Activated CD8-positive, alpha-beta memory T cell treated with anti-CD3 and anti-CD28 coated beads, Interleukin-2, amount 10 ng/mL, durations not matched to agents 7 days and 5 days (primary cell): ENCODE measurements at regions of chr21 and their contacts with region 1.

Region 1: GRCh38 chr21:44927587-44928461 is 7.1 kb upstream of the ITGB2 start:
- DNase-seq: peak; percentile 91
- ATAC-seq: peak; percentile 60
- H3K4me3 Mint-ChIP-seq: peak overlapping the region; percentile 72
- H3K27ac Mint-ChIP-seq: peak overlapping the region; percentile 93
- H3K4me1 Mint-ChIP-seq: peaks cover 78% of the 10 kb centered on the region
- H3K27me3 Mint-ChIP-seq: no peaks in the 10 kb centered on the region

Region 2: GRCh38 chr21:44820851-44821250 is 107.0 kb before region 1 on chr21:
- CTCF ChIA-PET with region 1: no interaction called
- DNase-seq: no peak
- ATAC-seq: no peak
- H3K4me3 Mint-ChIP-seq: no peak overlapping the region
- H3K27ac Mint-ChIP-seq: no peak overlapping the region
- H3K4me1 Mint-ChIP-seq: peaks cover 9% of the 10 kb centered on the region
- H3K27me3 Mint-ChIP-seq: no peaks in the 10 kb centered on the region

Region 3: DNA sequence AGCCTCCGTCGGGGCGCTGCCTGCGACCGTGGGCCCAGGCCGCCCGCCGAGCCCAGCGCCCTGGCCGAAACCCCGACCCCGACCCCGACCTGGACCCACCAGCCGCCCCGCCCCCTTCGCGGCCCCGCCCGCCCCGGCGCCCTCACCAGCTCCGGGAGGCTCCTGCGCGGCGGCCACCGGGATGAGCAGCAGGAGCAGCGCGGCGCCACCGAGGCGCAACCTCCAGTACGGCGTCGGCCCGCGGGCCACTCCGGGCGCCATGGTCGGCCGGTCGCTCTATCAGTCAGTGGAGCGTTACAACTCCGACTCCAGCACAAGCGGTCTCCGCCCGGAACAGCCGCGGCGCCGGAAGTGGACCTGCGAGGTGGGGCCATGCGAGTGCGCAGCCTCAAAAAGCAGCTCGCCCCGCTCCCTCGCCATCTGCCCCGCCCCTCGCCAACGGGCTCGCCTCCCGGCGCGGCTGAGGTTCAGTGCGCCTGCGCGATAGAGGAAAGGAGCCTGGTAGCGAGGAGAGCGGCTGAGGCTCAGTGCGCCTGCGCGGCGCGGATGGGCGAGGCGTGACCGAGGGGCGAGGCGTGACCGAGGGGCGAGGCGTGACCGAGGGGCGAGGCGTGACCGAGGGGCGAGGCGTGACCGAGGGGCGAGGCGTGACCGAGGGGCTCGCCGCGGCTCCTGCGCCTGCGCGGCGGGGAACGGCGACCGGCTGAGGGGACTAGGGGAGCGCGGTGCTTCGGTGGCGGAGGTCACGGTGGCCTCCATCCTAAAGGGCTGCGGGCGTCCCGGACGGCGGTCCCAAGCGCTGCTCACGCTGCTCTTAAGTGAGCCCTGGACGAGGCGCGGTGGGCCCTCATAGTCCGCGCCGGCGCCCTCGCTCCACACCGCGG is 54.2 kb before region 1 on chr21 and contains the start of gene PTTG1IP:
- CTCF ChIA-PET with region 1: interaction called, 36 read pairs
- DNase-seq: peak; percentile 99
- ATAC-seq: peak; percentile 86
- H3K4me3 Mint-ChIP-seq: peak within 1 kb of the TSS; percentile 86
- H3K27ac Mint-ChIP-seq: peak within 1 kb of the TSS; percentile 90
- H3K4me1 Mint-ChIP-seq: peaks cover 41% of the 10 kb centered on the region
- H3K27me3 Mint-ChIP-seq: no peaks in the 10 kb centered on the region
- total RNA-seq, gene PTTG1IP: 46.0 to 49.9 TPM

Region 4: DNA sequence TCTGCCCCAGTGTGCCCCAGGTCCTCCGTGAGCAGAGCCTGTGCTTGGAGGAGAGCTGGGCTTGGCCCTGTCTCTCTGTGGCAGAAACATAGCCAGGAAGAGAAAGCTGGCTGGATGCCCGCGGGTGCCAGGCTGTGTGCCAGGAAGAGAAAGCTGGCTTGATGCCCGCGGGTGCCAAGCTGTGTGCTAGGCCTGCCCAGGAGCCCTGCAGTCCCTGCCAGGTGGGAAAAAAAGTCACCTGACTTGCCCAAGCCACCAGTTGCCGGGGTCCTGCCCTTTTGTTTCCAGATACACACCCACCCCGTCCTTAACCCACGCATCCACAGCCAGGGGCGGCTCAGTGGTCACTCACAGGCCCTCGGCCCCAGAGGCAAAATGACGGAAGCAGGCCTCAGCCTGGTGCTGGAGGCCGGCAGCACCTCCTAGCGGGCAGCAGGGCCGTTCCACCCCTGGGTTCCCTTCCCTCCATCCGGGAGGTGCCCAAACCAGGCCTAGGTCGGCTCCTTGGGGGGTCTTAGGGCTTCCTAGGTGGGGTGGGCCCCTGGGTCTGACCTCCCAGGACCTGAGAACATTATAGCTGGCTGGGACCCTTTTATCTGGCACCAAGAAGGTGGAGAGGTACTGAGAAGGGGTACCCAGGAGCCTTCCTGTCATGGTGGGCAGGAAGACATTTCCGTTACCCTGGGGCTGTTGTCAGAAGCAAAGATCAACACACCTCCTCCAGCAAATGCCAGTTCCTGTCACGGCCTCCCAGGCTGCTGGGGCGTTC is 16.3 kb before region 1 on chr21:
- CTCF ChIA-PET with region 1: interaction called, 185 read pairs
- DNase-seq: peak; percentile 79
- ATAC-seq: peak; percentile 60
- H3K4me3 Mint-ChIP-seq: peak overlapping the region; percentile 42
- H3K27ac Mint-ChIP-seq: peak overlapping the region; percentile 83
- H3K4me1 Mint-ChIP-seq: peaks cover 55% of the 10 kb centered on the region
- H3K27me3 Mint-ChIP-seq: no peaks in the 10 kb centered on the region

Region 5: GRCh38 chr21:44939532-44940115 is 11.8 kb after region 1 on chr21 and contains the start of gene SLX9:
- CTCF ChIA-PET with region 1: interaction called, 13 read pairs
- DNase-seq: peak; percentile 82
- ATAC-seq: peak; percentile 92
- H3K4me3 Mint-ChIP-seq: peak within 1 kb of the TSS; percentile 85
- H3K27ac Mint-ChIP-seq: peak within 1 kb of the TSS; percentile 83
- H3K4me1 Mint-ChIP-seq: peaks cover 46% of the 10 kb centered on the region
- H3K27me3 Mint-ChIP-seq: no peaks in the 10 kb centered on the region
- total RNA-seq, gene SLX9: 56.8 to 62.9 TPM

Region 6: DNA sequence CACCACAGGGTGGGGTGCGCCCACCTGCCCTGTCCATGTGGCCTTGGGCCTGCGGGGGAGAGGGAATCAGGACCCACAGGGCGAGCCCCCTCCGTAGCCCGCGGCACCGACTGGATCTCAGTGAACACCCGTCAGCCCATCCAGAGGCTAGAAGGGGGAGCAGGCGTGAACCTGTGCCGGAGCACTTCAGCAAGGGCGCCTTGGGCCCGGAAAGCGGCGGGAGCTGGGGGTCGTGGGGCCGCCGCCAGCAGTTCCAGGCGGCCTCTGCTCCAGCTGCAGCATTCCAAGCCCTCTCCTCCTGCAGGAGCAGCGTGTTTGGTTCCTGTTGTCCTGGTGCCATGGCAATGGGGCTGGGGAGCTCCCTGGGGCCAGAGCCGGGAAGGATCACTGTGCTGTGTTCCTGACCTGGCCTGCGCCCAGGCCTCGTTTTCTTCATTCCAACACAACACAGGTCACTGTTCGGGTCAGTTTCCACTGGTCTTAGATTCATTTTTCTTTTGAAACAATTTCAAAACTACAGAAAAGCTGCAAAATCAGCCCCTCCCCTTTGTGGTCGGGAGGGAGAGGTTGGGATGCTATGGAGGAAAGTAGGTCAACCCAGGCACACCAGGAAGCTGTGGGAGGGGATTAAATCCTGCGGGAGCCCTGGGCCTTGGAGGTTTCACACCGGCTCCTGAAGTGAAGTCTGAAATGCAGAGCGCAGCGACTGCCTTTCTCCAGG is 30.8 kb after region 1 on chr21:
- CTCF ChIA-PET with region 1: no interaction called
- DNase-seq: no peak
- ATAC-seq: no peak
- H3K4me3 Mint-ChIP-seq: no peak overlapping the region
- H3K27ac Mint-ChIP-seq: no peak overlapping the region
- H3K4me1 Mint-ChIP-seq: no peaks in the 10 kb centered on the region
- H3K27me3 Mint-ChIP-seq: no peaks in the 10 kb centered on the region